ENCODE measurements at regions of chr12 and their contacts with region 1.

Region 1: GRCh38 chr12:103805961-103806360 is 35.1 kb downstream of the NT5DC3 start:
- DNase-seq: no peak
- H3K4me3 ChIP-seq: no peak overlapping the region
- H3K27ac ChIP-seq: no peak overlapping the region
- H3K4me1 ChIP-seq: peaks cover 26% of the 10 kb centered on the region
- H3K27me3 ChIP-seq: no peaks in the 10 kb centered on the region
- CTCF ChIP-seq: no peak
- POLR2A ChIP-seq: no peak

Region 2: DNA sequence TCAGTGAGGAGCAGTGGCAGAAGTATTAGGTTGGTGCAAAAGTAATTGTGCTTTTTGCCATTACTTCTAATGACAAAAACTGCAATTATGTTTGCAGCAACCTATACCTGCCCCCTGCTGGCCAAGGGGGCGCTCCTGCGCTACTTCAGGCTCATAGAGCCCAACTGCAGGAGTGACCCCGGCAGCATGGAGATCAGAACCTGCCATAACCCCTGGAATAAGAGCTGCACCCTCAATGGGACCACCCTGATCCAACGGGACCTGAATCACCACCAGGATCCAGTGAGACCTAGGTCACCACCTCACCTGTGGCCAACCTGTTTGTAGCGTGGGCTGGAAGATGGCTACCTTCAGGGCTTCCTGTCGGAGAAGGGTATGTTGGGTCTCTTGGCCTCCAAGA is 302.0 kb before region 1 on chr12:
- CTCF ChIA-PET with region 1: no interaction called
- POLR2A ChIA-PET with region 1: no interaction called
- dilution Hi-C with region 1: no loop called
- intact Hi-C with region 1: no loop called
- DNase-seq: no peak
- H3K4me3 ChIP-seq: no peak overlapping the region
- H3K27ac ChIP-seq: no peak overlapping the region
- H3K4me1 ChIP-seq: no peaks in the 10 kb centered on the region
- H3K27me3 ChIP-seq: no peaks in the 10 kb centered on the region
- CTCF ChIP-seq: no peak
- POLR2A ChIP-seq: no peak

Region 3: GRCh38 chr12:103821773-103822172 is 15.8 kb after region 1 on chr12:
- CTCF ChIA-PET with region 1: interaction called, 3 read pairs
- POLR2A ChIA-PET with region 1: no interaction called
- dilution Hi-C with region 1: no loop called
- intact Hi-C with region 1: loop called (anchors 2 kb)
- DNase-seq: no peak
- H3K4me3 ChIP-seq: no peak overlapping the region
- H3K27ac ChIP-seq: no peak overlapping the region
- H3K4me1 ChIP-seq: no peaks in the 10 kb centered on the region
- H3K27me3 ChIP-seq: no peaks in the 10 kb centered on the region
- CTCF ChIP-seq: no peak
- POLR2A ChIP-seq: no peak

Measured in endothelial cell of umbilical vein (primary cell).